Aorta (tissue), 5 donors: ENCODE measurements at regions of chr1 and their contacts with region 1.

Region 1: GRCh38 chr1:56376188-56376984 is 203.0 kb downstream of the PLPP3 start:
- DNase-seq: peak; percentile 85 to 86
- ATAC-seq: peak; percentile 80
- H3K4me3 ChIP-seq: no peak overlapping the region
- H3K27ac ChIP-seq: peak overlapping the region; percentile 37 to 46
- H3K4me1 ChIP-seq: peaks cover 6 to 12% of the 10 kb centered on the region in 2 donors
- H3K27me3 ChIP-seq: no peaks in the 10 kb centered on the region

Region 2: GRCh38 chr1:56169856-56170255 is 206.5 kb before region 1 on chr1:
- intact Hi-C with region 1: loop called in 1 of 2 experiments (anchors 10 kb)
- DNase-seq: no peak
- ATAC-seq: no peak
- H3K4me3 ChIP-seq: no peak overlapping the region
- H3K27ac ChIP-seq: no peak overlapping the region
- H3K4me1 ChIP-seq: peaks cover 2% of the 10 kb centered on the region in 2 donors
- H3K27me3 ChIP-seq: no peaks in the 10 kb centered on the region